ENCODE measurements at regions of chr16 and their contacts with region 1.

Region 1: DNA sequence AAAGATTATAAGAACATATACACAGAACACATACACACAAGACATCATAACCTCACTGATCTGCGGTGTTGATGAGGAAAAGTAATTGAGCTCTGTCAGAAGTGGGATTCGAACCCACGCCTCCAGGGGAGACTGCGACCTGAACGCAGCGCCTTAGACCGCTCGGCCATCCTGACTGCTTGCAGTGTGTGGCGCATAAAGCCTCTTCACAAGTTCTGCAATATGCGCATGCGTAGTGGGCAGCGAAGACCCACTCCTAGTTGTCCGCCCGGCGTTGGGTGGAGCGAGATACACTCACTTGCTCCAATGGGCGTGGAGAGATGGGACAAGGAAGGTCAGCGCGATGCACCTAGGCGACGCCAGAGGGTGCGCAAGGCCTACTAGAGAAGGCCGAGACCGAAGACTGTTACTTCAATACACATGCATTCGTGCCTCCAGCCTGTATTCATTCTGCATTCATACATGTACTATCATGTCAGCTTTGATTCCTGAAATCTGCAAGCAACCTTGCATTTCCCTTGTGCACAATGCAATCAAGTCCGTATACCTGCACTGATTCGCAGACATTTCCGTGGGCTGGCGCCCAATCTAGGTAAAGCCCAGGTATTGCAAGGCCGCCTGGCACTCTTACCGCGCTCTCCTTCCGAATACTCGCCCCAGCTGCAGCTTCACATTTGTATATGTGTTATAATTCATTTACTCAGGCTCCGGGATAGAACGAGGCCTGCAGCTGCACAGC is 16.1 kb upstream of the PLLP start:
- DNase-seq: peak; percentile 99
- ATAC-seq: peak; percentile 92 to 93
- H3K4me3 ChIP-seq: peak overlapping the region; percentile 46 to 65 (median 56)
- H3K27ac ChIP-seq: peak overlapping the region; percentile 86 to 98 (median 88)
- H3K4me1 ChIP-seq: peaks cover 21 to 28% of the 10 kb centered on the region in 2 donors
- H3K27me3 ChIP-seq: no peaks in the 10 kb centered on the region
- CTCF ChIP-seq: peak; percentile 90 to 99 (median 94)
- POLR2A ChIP-seq: no peak

Region 2: GRCh38 chr16:56988948-56989945 is 311.3 kb before region 1 on chr16 and contains the start of gene NLRC5:
- in situ Hi-C with region 1: no loop called
- intact Hi-C with region 1: loop called (anchors 5 kb)
- DNase-seq: peak; percentile 48 to 71
- ATAC-seq: peak; percentile 84 to 89
- H3K4me3 ChIP-seq: peak within 1 kb of the TSS; percentile 78 to 92 (median 82)
- H3K27ac ChIP-seq: peak within 1 kb of the TSS; percentile 78 to 86 (median 81)
- H3K4me1 ChIP-seq: peaks cover 16 to 21% of the 10 kb centered on the region in 2 donors
- H3K27me3 ChIP-seq: no peaks in the 10 kb centered on the region
- CTCF ChIP-seq: no peak
- POLR2A ChIP-seq: peak; percentile 59 to 76
- total RNA-seq, gene NLRC5: 2.5 to 9.4 (median 5.1) TPM

Region 3: DNA sequence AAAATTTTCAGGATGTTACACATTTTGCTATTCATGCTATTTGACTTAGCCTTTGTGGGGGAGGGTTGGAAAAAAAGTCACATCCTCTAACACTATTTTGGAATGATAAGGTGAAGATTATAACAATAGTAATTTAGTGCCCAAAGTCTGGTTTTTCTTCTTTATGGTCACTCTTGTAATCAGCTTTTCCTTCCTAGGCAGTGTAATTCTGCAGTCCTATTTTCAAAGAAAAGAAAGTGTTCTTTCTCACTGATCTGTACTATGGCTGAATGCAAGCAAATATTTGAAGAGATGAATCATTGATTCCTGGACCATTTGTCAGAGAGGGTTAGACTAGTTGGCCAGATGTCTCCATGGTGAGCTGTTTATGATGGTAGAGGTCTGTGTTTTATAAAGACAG is 106.0 kb before region 1 on chr16:
- in situ Hi-C with region 1: no loop called
- intact Hi-C with region 1: no loop called
- DNase-seq: no peak
- ATAC-seq: no peak
- H3K4me3 ChIP-seq: no peak overlapping the region
- H3K27ac ChIP-seq: no peak overlapping the region
- H3K4me1 ChIP-seq: peaks cover 10 to 13% of the 10 kb centered on the region in 2 donors
- H3K27me3 ChIP-seq: no peaks in the 10 kb centered on the region
- CTCF ChIP-seq: no peak
- POLR2A ChIP-seq: no peak

Region 4: GRCh38 chr16:57226701-57227621 is 73.6 kb before region 1 on chr16:
- in situ Hi-C with region 1: no loop called
- intact Hi-C with region 1: no loop called
- DNase-seq: no peak
- ATAC-seq: no peak
- H3K4me3 ChIP-seq: no peak overlapping the region
- H3K27ac ChIP-seq: no peak overlapping the region
- H3K4me1 ChIP-seq: no peaks in the 10 kb centered on the region
- H3K27me3 ChIP-seq: no peaks in the 10 kb centered on the region
- CTCF ChIP-seq: no peak
- POLR2A ChIP-seq: no peak

Region 5: GRCh38 chr16:57244767-57245471 is 55.6 kb before region 1 on chr16 and contains the start of gene ARL2BP:
- in situ Hi-C with region 1: no loop called
- intact Hi-C with region 1: loop called (anchors 1 kb)
- DNase-seq: peak; percentile 96 to 98
- ATAC-seq: peak; percentile 92 to 93
- H3K4me3 ChIP-seq: peak within 1 kb of the TSS; percentile 75 to 97 (median 87)
- H3K27ac ChIP-seq: peak within 1 kb of the TSS; percentile 91 to 99 (median 94)
- H3K4me1 ChIP-seq: peaks cover 8 to 12% of the 10 kb centered on the region in 2 donors
- H3K27me3 ChIP-seq: no peaks in the 10 kb centered on the region
- CTCF ChIP-seq: no peak
- POLR2A ChIP-seq: peak; percentile 69 to 79
- total RNA-seq, gene ARL2BP: 25.5 to 52.6 (median 44.5) TPM

Region 6: GRCh38 chr16:57413301-57413730 is 112.8 kb after region 1 on chr16:
- in situ Hi-C with region 1: loop called (anchors 5 kb)
- intact Hi-C with region 1: loop called (anchors 1 kb)
- DNase-seq: no peak
- ATAC-seq: no peak
- H3K4me3 ChIP-seq: no peak overlapping the region
- H3K27ac ChIP-seq: no peak overlapping the region
- H3K4me1 ChIP-seq: peaks cover 6% of the 10 kb centered on the region in 2 donors
- H3K27me3 ChIP-seq: no peaks in the 10 kb centered on the region
- CTCF ChIP-seq: no peak
- POLR2A ChIP-seq: no peak

Region 7: DNA sequence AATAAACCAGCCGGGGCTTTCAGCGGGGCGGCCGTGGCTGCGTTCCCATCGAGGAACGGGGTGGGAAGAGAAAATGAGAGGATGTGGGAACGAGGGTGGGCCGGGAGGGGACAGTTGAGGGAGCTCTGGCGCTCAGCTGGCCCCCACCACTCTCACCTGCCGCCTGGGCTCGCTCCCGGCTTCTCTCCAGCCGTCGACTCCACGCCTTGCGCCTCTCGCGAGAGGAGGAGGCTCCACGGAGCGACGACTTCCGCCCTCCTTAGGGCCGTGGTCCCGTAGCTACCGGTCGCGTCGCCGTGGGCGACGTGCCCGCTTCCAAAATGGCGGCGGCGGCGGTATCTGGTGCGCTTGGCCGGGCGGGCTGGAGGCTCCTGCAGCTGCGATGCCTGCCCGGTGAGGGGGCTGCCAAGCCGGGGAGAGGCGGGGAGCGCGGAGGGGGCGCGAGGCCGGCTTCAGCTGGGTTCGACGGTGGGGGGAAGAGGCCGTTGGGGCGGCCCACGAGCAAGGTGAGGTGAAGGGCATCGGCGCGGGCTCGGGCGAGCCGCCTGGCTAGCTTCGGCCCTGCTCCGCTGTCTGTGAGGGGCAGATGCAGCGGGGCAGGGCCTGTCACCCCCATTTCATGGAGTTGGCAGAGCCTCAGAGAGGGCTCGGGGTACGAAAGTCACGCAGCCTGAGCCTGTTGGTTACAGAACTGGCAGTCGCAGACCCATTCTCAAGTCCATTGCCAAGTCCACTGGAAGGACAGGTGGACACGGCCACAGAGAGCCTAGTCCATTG is 146.8 kb after region 1 on chr16 and contains the starts of genes CIAPIN1 and COQ9:
- in situ Hi-C with region 1: no loop called
- intact Hi-C with region 1: loop called (anchors 1 kb)
- DNase-seq: peak; percentile 89 to 94
- ATAC-seq: peak; percentile 92 to 97
- H3K4me3 ChIP-seq: peak within 1 kb of the TSS; percentile 82 to 97 (median 95)
- H3K27ac ChIP-seq: peak within 1 kb of the TSS; percentile 98 to 99 (median 98)
- H3K4me1 ChIP-seq: peaks cover 32 to 38% of the 10 kb centered on the region in 2 donors
- H3K27me3 ChIP-seq: no peaks in the 10 kb centered on the region
- CTCF ChIP-seq: no peak
- POLR2A ChIP-seq: peak; percentile 95 to 97
- total RNA-seq, gene CIAPIN1: 31.0 to 38.8 (median 37.9) TPM
- total RNA-seq, gene COQ9: 107 to 171 (median 135) TPM

Region 8: DNA sequence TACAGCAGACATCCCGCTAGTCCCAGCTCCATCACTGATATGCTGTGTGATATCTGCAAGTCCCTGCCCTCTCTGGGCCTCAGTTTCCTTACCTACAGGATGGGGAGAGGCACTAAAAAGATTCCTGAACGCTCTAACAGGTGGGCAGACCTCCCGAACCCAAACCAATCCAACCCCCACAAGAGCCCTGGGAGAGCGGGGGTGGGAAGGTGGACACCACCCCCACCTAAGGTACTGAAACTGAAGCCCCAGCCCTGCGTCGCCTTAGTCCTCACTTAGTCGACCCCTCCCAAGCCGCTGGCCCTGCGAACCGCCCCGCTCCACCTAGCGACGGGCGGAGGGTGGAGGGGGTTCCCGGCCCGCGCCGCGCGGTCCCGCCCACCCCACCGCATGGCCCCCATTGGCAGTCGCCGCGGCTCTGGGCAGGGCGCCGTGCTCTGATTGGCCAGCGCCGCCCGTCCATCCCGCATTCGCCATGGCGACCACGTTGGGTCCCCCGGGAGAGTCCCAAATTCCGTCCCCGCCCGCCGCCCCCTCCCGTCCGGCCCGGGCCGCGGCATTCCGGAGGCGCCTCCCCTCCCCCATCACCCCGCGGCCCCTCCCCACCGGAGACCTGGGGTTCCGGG is 235.2 kb after region 1 on chr16:
- in situ Hi-C with region 1: no loop called
- intact Hi-C with region 1: loop called (anchors 5 kb)
- DNase-seq: peak; percentile 78 to 86
- ATAC-seq: peak; percentile 85 to 90
- H3K4me3 ChIP-seq: peak overlapping the region; percentile 73 to 94 (median 83)
- H3K27ac ChIP-seq: peak overlapping the region; percentile 65 to 83 (median 76)
- H3K4me1 ChIP-seq: peaks cover 0 to 6% of the 10 kb centered on the region in 2 donors
- H3K27me3 ChIP-seq: no peaks in the 10 kb centered on the region
- CTCF ChIP-seq: peak in 2 of 5 experiments; percentile 17 to 22
- POLR2A ChIP-seq: no peak

Measured in gastrocnemius medialis (tissue), 4 donors.